Panc1 (cell line): ENCODE measurements at regions of chr7 and their contacts with region 1.

Region 1: DNA sequence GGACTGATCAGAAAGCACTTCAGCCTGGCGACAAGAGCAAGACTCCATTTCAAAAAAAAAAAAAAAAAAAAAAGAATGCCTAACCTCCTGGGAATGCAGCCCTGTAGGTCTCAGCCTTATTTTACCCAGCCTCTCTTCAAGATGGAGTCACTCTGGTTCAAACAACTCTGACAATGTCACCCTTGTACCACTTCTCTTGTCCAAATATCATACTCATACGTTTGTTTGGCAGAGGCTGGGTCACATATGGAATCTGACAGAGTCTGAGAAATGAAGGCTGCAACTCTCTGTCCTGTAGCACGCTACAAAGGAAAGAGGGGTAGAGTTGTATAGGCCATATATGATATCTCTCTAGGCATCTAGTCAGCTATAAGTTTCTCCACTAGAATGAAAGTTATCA is 58.6 kb upstream of the GSAP start:
- DNase-seq: no peak
- ATAC-seq: no peak
- H3K4me3 ChIP-seq: no peak overlapping the region
- H3K27ac ChIP-seq: no peak overlapping the region
- H3K4me1 ChIP-seq: no peaks in the 10 kb centered on the region
- H3K27me3 ChIP-seq: no peaks in the 10 kb centered on the region; the same call in 1 of the 2 replicates
- CTCF ChIP-seq: no peak

Region 2: DNA sequence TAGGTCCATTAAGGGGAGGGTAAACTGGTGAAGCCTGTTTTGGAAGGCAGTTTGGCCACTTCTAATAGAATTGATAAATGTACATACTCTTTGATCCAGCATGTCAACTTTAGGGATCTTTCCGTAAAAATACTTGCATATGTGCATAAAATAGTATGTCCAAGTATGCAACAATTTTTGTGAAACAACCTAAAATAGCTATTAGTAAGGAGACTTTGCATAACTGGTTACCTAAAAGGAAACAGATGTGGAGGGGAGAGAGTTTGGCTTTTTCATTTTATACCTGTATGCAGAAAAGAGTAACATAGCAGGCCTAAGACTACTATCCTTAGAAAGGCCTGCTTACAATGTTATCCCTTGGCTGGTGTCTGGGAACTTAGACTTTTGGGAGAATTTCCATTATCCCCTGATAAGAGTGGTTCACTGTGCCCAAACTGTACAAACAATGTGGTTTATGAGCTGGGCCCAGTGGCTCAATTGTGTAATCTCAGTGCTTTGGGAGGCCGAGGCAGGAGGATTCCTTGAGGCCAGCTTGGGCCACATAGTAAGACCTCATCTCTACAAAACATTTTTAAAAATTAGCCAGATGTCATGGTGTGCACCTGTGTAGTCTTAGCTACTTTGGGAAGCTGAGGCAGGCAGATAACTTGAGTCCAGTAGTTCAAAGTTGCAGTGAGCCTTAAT is 83.7 kb after region 1 on chr7:
- CTCF ChIA-PET with region 1: no interaction called
- POLR2A ChIA-PET with region 1: no interaction called
- in situ Hi-C with region 1: no loop called
- intact Hi-C with region 1: no loop called
- DNase-seq: no peak
- ATAC-seq: no peak
- H3K4me3 ChIP-seq: no peak overlapping the region
- H3K27ac ChIP-seq: no peak overlapping the region
- H3K4me1 ChIP-seq: peaks cover 6% of the 10 kb centered on the region
- H3K27me3 ChIP-seq: no peaks in the 10 kb centered on the region
- CTCF ChIP-seq: no peak

Region 3: DNA sequence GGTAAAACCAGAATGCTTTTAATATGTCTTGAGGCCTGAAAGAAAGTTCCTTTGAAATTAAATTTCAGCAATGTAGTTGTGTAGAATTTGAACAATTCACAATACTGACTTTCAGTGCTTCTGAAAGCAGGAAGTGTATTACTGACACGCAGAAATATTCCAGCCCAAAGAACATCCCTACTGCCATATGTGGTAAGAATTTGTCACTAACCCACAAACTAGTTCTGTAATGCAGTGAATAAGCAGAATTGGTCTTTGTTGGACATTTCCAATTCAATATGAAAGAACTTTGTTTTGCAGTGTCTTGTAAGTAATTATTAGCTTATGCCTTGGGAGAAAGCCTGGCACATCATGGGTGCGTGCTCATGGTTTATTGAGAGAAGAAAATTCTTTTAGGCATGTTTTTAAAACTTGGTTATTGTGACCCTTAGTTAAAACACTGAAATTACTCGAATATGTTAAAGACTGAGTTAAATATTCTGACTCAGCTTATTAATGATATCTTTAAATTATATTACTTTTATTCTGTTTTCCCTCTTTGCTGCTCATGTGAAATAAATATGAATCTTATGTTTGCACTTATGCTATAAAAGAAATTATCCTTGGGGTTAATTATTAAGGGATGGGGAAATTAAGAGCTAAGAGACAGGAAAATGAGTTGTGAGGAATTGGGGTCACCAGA is 95.7 kb after region 1 on chr7:
- CTCF ChIA-PET with region 1: no interaction called
- POLR2A ChIA-PET with region 1: interaction called, 16 read pairs
- in situ Hi-C with region 1: no loop called
- intact Hi-C with region 1: no loop called
- DNase-seq: no peak
- ATAC-seq: no peak
- H3K4me3 ChIP-seq: no peak overlapping the region
- H3K27ac ChIP-seq: no peak overlapping the region
- H3K4me1 ChIP-seq: no peaks in the 10 kb centered on the region
- H3K27me3 ChIP-seq: no peaks in the 10 kb centered on the region
- CTCF ChIP-seq: no peak